H1 (cell line): ENCODE measurements at regions of chr1 and their contacts with region 1.

Region 1: DNA sequence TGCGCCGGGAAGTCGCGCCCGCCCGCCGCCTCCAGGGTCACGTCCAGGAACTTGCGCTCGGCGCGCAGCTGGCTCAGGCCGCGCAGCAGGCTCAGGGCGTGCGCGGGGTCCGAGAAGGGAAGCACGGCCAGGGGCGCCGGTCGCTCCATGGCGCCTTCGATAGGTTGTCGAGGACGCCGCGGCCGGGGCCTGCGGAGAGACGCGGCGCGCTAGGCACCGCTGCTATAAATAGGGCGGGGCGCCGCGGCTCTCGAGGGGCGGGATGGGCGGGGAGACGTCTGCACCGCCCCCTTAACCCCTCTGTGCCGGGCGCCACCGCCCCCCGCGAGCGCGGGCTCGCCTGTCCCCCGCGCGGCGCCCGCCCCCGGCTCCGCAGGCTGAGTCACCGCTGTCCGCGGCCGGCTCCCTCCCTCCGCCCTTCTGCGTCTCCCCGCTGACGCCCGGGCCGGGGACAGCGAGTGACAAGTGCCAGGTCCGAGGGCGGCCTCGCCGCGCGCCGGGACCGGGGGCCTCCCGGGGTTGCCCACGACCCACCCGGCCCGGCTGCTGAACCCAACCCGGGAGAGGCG is at the start of gene KLHL21:
- DNase-seq: peak in 1 of 2 experiments; percentile 79
- H3K4me3 ChIP-seq: peak within 1 kb of the TSS; percentile 75 to 92 (median 86)
- H3K27ac ChIP-seq: peak within 1 kb of the TSS; percentile 60
- H3K4me1 ChIP-seq: peaks cover 2 to 13% (median 9%) of the 10 kb centered on the region in 4 experiments
- H3K27me3 ChIP-seq: no peaks in the 10 kb centered on the region; a peak in 1 of 7 replicates
- CTCF ChIP-seq: peak in 1 of 3 experiments; percentile 0; a peak in 1 of 4 replicates
- EP300 ChIP-seq: no peak
- POLR2A ChIP-seq: peak in 1 of 2 experiments; percentile 75; a peak in 1 of 3 replicates
- RAD21 ChIP-seq: no peak
- total RNA-seq, gene KLHL21: 22.1 and 22.3 TPM in 2 replicates

Region 2: DNA sequence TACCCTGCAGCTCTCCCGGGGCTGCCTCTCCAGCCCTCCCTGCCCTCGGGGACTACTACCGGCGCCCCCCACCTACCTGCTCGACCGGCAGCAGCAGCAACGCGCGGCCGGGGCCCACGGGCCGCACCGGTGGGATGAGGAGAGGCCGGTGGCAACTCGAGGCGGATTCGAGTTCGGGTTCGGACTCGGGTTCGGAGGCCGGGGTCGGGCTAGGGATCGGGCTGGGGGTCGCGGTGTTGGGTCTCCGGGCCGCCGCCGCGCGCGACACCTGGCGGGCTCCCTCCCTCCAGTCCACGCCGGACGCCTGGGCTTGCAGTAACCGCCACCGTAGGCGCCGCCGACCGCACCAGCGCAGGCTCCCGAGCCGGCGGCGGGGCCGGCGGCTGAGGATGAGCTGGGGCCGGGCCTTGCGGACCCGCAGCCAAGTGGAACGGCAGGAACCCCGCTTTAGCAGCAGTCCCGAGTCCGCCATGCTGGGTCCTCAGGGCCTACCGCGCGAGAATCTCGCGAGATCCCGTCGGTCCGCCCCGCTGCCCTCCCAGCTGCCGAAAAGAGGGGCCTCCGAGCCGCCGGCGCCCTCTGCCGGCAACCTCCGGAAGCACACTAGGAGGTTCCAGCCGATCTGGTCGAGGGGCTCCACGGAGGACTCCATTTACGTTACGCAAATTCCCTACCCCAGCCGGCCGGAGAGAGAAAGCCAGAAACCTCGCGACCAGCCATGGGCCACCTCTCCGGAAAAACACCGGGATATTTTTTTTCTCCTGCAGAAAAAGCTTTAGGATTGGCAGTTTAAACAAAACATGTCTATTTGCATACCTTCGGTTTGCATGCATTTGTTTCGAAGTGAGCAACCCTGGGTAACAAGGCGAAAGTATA is 48.5 kb before region 1 on chr1 and contains the start of gene NOL9:
- CTCF ChIA-PET with region 1: interaction called, 4 read pairs
- POLR2A ChIA-PET with region 1: interaction called, 46 read pairs
- DNase-seq: peak; percentile 73 to 99
- H3K4me3 ChIP-seq: peak within 1 kb of the TSS; percentile 66 to 97 (median 90)
- H3K27ac ChIP-seq: peak within 1 kb of the TSS; percentile 86
- H3K4me1 ChIP-seq: peaks cover 3 to 6% (median 5%) of the 10 kb centered on the region in 4 experiments; a peak in 5 of 7 replicates
- H3K27me3 ChIP-seq: no peaks in the 10 kb centered on the region
- CTCF ChIP-seq: peak; percentile 85 to 93 (median 87)
- EP300 ChIP-seq: no peak
- POLR2A ChIP-seq: peak; percentile 54 to 87
- RAD21 ChIP-seq: peak; percentile 47 to 60
- total RNA-seq, gene NOL9: 38.1 and 42.9 TPM in 2 replicates

Region 3: DNA sequence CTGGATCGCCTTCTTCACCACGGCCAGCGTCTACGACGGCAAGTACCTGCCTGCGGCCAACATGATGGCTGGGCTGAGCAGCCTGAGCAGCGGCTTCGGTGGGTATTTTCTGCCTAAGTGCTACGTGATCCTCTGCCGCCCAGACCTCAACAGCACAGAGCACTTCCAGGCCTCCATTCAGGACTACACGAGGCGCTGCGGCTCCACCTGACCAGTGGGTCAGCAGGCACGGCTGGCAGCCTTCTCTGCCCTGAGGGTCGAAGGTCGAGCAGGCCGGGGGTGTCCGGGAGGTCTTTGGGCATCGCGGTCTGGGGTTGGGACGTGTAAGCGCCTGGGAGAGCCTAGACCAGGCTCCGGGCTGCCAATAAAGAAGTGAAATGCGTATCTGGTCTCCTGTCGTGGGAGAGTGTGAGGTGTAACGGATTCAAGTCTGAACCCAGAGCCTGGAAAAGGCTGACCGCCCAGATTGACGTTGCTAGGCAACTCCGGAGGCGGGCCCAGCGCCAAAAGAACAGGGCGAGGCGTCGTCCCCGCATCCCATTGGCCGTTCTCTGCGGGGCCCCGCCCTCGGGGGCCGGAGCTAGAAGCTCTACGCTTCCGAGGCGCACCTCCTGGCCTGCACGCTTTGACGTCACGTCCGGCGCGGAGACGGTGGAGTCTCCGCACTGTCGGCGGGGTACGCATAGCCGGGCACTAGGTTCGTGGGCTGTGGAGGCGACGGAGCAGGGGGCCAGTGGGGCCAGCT is 23.2 kb before region 1 on chr1 and contains the start of gene ZBTB48:
- CTCF ChIA-PET with region 1: interaction called, 4 read pairs
- POLR2A ChIA-PET with region 1: interaction called, 196 read pairs
- DNase-seq: peak; percentile 82 to 96
- H3K4me3 ChIP-seq: peak within 1 kb of the TSS; percentile 66 to 75 (median 72)
- H3K27ac ChIP-seq: peak within 1 kb of the TSS; percentile 6; the same call in 1 of the 2 replicates
- H3K4me1 ChIP-seq: peaks cover 0 to 17% (median 13%) of the 10 kb centered on the region in 4 experiments; a peak in 6 of 7 replicates
- H3K27me3 ChIP-seq: no peaks in the 10 kb centered on the region; a peak in 2 of 7 replicates
- CTCF ChIP-seq: no peak; a peak in 1 of 4 replicates
- EP300 ChIP-seq: no peak
- POLR2A ChIP-seq: peak in 1 of 2 experiments; percentile 92; a peak in 2 of 3 replicates
- RAD21 ChIP-seq: no peak
- total RNA-seq, gene ZBTB48: 21.4 and 28.2 TPM in 2 replicates

Region 4: DNA sequence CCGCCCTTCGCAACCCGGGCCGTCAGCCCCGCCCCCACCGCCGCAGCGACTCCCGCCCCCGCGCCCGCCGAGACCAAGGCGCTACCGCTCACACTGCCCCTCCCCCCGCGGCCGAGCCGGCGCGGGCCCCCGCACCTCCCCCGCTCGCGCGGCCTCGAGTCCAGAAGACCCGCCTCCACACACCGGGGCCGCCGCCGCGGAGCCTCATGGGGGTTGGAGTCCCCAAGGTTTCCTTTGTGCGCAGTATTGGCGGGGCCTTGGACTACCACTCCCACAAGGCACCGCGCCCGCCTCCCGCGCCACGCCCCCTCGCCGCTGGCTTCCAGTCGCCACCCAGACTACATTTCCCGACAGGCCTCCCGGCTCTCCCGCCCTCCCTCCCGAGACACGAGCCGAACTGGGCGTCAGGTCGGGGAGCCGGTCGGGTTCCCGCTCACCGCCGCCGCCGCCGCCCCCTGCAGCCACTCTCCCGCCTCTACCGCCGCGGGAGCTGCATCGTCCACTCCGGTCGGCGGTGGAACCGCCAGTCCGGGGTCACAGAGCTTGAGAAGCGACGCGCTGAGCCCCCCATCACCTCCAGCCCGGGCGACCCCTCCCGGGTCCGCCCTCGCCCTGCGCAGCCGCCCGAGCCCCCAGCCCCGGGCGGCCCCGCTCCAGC is 10.7 kb after region 1 on chr1 and contains the start of gene PHF13:
- CTCF ChIA-PET with region 1: interaction called, 16 read pairs
- POLR2A ChIA-PET with region 1: interaction called, 175 read pairs
- DNase-seq: peak; percentile 98 to 99
- H3K4me3 ChIP-seq: peak within 1 kb of the TSS; percentile 76 to 100 (median 86)
- H3K27ac ChIP-seq: peak within 1 kb of the TSS; percentile 81; the same call in 1 of the 2 replicates
- H3K4me1 ChIP-seq: peaks cover 0 to 2% (median 0%) of the 10 kb centered on the region in 4 experiments; a peak in 1 of 7 replicates
- H3K27me3 ChIP-seq: no peaks in the 10 kb centered on the region
- CTCF ChIP-seq: 0 out of 4 replicates have a peak, but pooled peaks of 1 of the 3 experiments have one; percentile 3
- EP300 ChIP-seq: peak in 1 of 2 experiments; percentile 71; a peak in 1 of 3 replicates
- POLR2A ChIP-seq: no peak; a peak in 1 of 3 replicates
- RAD21 ChIP-seq: no peak
- total RNA-seq, gene PHF13: 38.7 and 39.6 TPM in 2 replicates

Region 5: DNA sequence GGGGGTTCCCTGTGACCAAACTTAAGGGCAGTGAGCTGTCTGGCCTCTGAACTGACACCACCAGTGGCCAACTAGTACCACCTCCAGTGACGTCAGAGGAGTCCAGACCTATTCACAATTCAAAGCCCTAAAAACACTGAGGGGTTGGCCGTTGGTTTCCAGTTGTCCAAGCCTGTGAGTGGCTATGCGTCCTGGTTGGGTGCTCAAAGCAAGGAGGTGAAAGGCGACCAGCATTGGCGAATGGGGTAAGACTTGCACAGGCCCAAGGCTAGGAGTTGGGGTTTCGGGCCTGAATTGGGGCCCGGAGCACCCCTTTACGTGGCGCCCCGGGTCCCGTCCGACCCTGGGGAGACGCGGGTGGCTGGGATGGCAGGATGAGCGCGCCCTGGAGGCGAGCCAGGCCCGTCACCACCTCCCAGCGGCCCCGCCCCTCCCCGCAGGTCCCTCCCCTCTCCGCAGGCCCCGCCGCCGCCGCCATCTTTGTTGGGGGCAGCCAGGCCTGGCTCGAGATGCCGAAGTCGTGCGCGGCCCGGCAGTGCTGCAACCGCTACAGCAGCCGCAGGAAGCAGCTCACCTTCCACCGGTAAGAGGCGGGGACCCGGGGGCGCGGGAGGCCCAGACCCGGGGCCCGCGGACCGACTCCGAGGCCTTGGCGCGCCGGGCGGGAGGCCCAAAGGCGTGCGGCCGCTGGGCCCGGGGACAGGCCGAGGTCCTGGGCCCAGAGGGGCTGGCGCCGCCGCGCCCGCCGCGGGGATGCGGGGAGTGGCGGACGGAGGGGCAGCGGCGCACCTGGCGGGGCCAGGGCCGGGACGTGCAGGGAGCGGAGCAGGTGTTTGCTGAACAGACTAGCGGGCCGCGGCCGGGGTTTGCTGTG is 22.2 kb after region 1 on chr1 and contains the start of gene THAP3:
- CTCF ChIA-PET with region 1: interaction called, 9 read pairs
- POLR2A ChIA-PET with region 1: interaction called, 175 read pairs
- DNase-seq: peak in 1 of 2 experiments; percentile 93
- H3K4me3 ChIP-seq: peak within 1 kb of the TSS; percentile 74 to 83 (median 76)
- H3K27ac ChIP-seq: peak within 1 kb of the TSS; percentile 75
- H3K4me1 ChIP-seq: 0 out of 7 replicates have a peak, but pooled peaks cover 0 to 2% (median 0%) of the 10 kb centered on the region in 4 experiments
- H3K27me3 ChIP-seq: no peaks in the 10 kb centered on the region
- CTCF ChIP-seq: peak in 1 of 3 experiments; percentile 38; a peak in 2 of 4 replicates
- EP300 ChIP-seq: 0 out of 3 replicates have a peak, but pooled peaks of 1 of the 2 experiments have one; percentile 13
- POLR2A ChIP-seq: peak in 1 of 2 experiments; percentile 25; a peak in 1 of 3 replicates
- RAD21 ChIP-seq: no peak
- total RNA-seq, gene THAP3: 12.4 and 15.3 TPM in 2 replicates

Region 6: GRCh38 chr1:6634371-6635052 is 31.8 kb after region 1 on chr1:
- CTCF ChIA-PET with region 1: interaction called, 5 read pairs
- POLR2A ChIA-PET with region 1: interaction called, 36 read pairs
- DNase-seq: peak in 1 of 2 experiments; percentile 79
- H3K4me3 ChIP-seq: no peak overlapping the region
- H3K27ac ChIP-seq: no peak overlapping the region
- H3K4me1 ChIP-seq: no peaks in the 10 kb centered on the region
- H3K27me3 ChIP-seq: no peaks in the 10 kb centered on the region
- CTCF ChIP-seq: peak; percentile 53 to 68 (median 58)
- EP300 ChIP-seq: no peak
- POLR2A ChIP-seq: no peak; a peak in 1 of 3 replicates
- RAD21 ChIP-seq: peak; percentile 53 to 64

Region 7: DNA sequence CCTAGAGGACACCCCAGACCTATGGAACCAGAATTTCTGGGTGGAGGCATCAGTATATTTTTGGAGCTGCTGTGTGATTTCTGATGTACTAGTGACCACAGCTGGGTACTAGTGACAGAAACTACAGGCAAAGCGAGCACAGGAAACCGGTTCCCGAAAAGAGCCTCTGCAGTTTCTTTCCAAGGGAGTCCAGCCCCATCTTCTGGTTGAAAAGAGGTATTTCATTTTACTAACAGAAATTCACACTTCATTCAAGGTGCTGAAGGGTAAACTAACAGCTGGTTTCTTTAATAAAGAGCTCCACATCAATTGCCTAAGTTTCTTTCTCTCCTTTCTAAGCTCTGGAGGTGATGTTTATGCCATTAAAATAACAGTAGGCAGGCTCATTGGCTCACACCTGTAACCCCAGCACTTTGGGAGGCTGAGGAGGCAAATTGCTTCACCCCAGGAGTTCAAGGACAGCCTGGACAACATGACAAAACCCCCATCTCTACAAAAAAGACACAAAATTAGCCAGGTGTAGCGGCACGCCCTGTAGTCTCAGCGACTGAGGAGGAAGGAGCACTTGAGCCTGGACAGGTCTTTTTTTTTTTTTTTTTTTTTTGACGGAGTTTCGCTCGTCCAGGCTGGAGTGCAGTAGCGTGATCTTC is 43.9 kb after region 1 on chr1:
- CTCF ChIA-PET with region 1: interaction called, 9 read pairs
- POLR2A ChIA-PET with region 1: interaction called, 11 read pairs
- DNase-seq: no peak
- H3K4me3 ChIP-seq: no peak overlapping the region
- H3K27ac ChIP-seq: no peak overlapping the region
- H3K4me1 ChIP-seq: no peaks in the 10 kb centered on the region; a peak in 2 of 7 replicates
- H3K27me3 ChIP-seq: no peaks in the 10 kb centered on the region
- CTCF ChIP-seq: peak in 2 of 3 experiments; percentile 48 to 54; a peak in 3 of 4 replicates
- EP300 ChIP-seq: no peak
- POLR2A ChIP-seq: no peak
- RAD21 ChIP-seq: peak; percentile 75 to 79